Heart right ventricle (tissue), 16 donors: ENCODE measurements at regions of chr14 and their contacts with region 1.

Region 1: DNA sequence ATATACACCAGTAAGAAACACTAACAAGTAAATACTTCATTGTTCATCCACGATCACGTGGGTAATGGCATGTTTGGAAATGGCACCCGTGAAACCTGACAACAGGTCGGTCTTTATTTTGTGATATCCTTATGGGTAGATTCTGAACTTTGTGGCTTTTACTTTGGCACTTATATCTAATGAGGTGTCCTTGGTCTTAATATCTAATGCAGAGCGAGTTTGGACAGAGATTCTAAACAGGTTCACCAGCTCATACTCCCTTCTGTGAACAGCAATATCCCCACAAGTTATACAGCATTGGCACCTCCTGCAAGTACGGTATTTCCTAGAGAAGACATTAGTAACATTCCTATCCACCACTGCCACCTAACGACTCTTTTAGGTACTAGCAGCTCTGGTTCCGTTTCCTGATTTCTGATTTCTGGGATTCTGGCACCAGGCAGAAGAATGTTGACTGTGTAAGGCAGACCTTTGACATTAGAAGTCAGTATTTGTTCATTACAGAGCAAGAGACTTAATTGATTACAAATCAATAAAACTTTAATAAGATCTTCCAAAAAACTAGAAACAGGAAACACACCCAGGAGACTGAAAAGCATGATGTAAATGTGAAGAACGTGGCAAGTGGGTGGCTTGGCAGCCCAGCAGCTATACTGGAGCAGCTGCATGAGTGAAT is 2.4 kb downstream of the ANG start:
- DNase-seq: peak in 1 of 2 donors; percentile 57
- ATAC-seq: peak; percentile 67 to 89 (median 82)
- H3K4me3 ChIP-seq: no peak overlapping the region
- H3K27ac ChIP-seq: peak overlapping the region in 1 of 10 donors; percentile 14
- H3K4me1 ChIP-seq: peaks cover 0 to 16% (median 6%) of the 10 kb centered on the region in 9 donors
- H3K27me3 ChIP-seq: no peaks in the 10 kb centered on the region
- CTCF ChIP-seq: peak; percentile 66 to 92 (median 85)

Region 2: DNA sequence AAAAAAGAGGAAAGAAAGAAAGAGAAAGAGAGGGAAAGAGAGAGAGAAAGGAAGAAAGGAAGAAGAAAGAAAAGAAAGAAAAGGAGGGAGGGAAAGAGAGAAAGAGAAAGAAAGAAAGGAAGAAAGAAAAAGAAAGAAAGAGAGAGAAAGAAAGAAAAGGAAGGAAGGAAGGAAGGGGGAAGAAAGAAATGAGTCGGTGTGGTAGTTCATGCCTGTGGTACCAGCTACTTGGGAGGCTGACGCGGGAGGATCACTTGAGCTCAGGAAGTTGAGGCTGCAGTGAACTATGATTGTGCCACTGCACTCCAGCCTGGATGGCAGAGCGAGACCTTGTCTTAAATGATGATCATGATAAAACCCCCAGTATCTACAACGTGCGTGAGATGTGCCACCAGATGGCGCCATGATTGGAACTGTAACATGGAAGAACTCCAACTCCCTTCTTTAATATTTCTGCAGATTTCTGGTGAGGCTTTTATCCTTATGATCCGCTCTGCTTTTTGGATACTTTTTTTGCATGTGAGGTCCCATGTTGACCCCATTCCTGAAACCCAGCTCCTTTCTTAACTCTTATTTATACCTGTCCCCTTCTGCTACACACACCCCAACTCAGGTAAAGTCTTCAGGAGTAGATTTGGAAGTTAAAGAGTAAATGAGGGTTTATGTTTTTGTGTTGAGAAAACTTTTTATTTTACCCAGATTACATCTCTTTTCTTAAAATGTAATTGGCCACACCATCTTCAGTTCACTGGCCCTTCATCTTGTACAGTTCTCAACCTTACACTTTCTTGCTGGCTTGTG is 160.0 kb before region 1 on chr14:
- intact Hi-C with region 1: loop called in 5 of 10 experiments (anchors 2 to 10 kb)
- DNase-seq: peak; percentile 58 to 60
- ATAC-seq: no peak
- H3K4me3 ChIP-seq: no peak overlapping the region
- H3K27ac ChIP-seq: no peak overlapping the region
- H3K4me1 ChIP-seq: peaks cover 0 to 5% (median 0%) of the 10 kb centered on the region in 9 donors
- H3K27me3 ChIP-seq: peaks cover 0 to 5% (median 0%) of the 10 kb centered on the region in 7 donors
- CTCF ChIP-seq: peak; percentile 30 to 74 (median 65)

Region 3: DNA sequence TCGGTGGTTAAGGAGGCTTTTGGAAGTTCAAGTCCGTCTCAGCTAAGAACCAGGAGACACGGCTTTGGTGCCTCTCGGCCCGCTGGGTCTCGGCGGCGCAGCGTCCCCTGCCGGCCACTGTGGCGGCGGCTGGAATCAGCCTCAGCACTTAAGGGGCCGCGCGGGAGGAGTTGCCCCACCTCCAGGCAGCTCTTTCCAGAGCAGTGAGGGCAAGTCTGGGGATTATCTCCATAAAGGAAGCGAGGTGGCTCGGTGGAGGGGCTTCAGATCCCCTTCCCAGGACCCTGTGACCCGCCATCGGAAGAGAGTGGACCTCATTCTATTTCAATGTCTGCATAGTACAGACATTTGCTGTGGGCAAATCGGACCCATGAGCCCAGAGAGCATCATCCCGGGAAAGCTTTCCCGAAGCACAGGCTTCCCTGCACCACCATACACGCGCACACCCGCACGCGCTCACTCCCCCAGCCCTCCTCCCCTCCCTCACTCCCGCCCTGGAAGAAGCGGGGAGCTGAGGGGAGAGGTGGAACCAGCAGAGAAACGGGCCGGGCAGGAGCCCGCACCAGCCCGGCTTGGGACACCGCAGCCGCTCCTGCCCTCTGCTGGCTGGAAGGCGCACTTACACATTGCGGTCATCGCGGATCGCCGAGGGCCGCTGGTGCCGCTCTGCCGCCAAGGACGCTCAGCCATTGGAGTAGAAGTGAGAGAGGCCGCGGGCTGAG is 280.2 kb after region 1 on chr14:
- intact Hi-C with region 1: loop called in 8 of 10 experiments (anchors 5 to 10 kb)
- DNase-seq: peak; percentile 83 to 87
- ATAC-seq: peak; percentile 95 to 98 (median 97)
- H3K4me3 ChIP-seq: peak overlapping the region; percentile 33 to 79 (median 68)
- H3K27ac ChIP-seq: peak overlapping the region in 9 of 10 donors; percentile 41 to 87 (median 69)
- H3K4me1 ChIP-seq: peaks cover 0 to 18% (median 8%) of the 10 kb centered on the region in 9 donors
- H3K27me3 ChIP-seq: peaks cover 0 to 7% (median 0%) of the 10 kb centered on the region in 7 donors
- CTCF ChIP-seq: peak; percentile 70 to 91 (median 78)